CD4-positive, alpha-beta memory T cell (primary cell): ENCODE measurements at regions of chr16 and their contacts with region 1.

Region 1: GRCh38 chr16:1677802-1678496 is at the start of gene JPT2:
- DNase-seq: peak; percentile 93 to 95 (median 95)
- H3K4me3 ChIP-seq: peak within 1 kb of the TSS; percentile 46 to 73
- H3K4me3 Mint-ChIP-seq: peak within 1 kb of the TSS; percentile 86 to 94 (median 90)
- H3K27ac ChIP-seq: peak within 1 kb of the TSS; percentile 70
- H3K27ac Mint-ChIP-seq: peak within 1 kb of the TSS; percentile 77 to 95 (median 86)
- H3K4me1 ChIP-seq: peaks cover 28% of the 10 kb centered on the region
- H3K4me1 Mint-ChIP-seq: peaks cover 13 to 49% (median 29%) of the 10 kb centered on the region in 4 donors
- H3K27me3 ChIP-seq: no peaks in the 10 kb centered on the region
- H3K27me3 Mint-ChIP-seq: no peaks in the 10 kb centered on the region
- total RNA-seq, gene JPT2: 38.1 to 43.1 TPM

Region 2: GRCh38 chr16:1474796-1475551 is 203.0 kb before region 1 on chr16 and contains the start of gene CLCN7:
- CTCF ChIA-PET with region 1: no interaction called
- POLR2A ChIA-PET with region 1: interaction called, 4 read pairs
- intact Hi-C with region 1: loop called (anchors 1 kb)
- DNase-seq: peak; percentile 83 to 87 (median 85)
- H3K4me3 ChIP-seq: peak within 1 kb of the TSS; percentile 49 to 74
- H3K4me3 Mint-ChIP-seq: peak within 1 kb of the TSS; percentile 80 to 91 (median 84)
- H3K27ac ChIP-seq: peak within 1 kb of the TSS; percentile 91
- H3K27ac Mint-ChIP-seq: peak within 1 kb of the TSS; percentile 85 to 93 (median 91)
- H3K4me1 ChIP-seq: peaks cover 25% of the 10 kb centered on the region
- H3K4me1 Mint-ChIP-seq: peaks cover 8 to 46% (median 30%) of the 10 kb centered on the region in 4 donors
- H3K27me3 ChIP-seq: no peaks in the 10 kb centered on the region
- H3K27me3 Mint-ChIP-seq: peaks cover 0 to 3% of the 10 kb centered on the region in 2 donors
- total RNA-seq, gene CLCN7: 105 to 111 TPM

Region 3: DNA sequence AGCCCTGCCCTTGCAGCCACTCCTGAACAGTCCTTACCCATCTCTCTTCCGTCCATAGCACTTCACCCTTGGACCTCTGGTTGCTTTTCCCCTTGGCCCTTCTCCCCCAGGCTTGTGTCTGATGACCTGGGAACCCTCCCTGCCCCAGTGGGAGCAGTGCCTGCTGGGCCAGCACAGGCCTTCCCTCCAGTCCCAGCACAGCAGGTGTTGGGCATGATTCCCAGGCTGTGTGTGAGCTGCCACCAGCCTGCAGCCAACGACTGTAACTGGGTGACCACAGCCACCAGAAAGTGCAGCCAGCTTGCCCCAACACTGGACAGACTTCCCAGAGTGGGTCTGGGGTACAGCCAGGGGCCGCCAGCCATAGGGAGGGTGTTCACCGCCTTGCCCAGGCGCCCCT is 35.8 kb before region 1 on chr16:
- CTCF ChIA-PET with region 1: no interaction called
- POLR2A ChIA-PET with region 1: no interaction called
- intact Hi-C with region 1: no loop called
- DNase-seq: no peak
- H3K4me3 ChIP-seq: no peak overlapping the region
- H3K4me3 Mint-ChIP-seq: no peak overlapping the region
- H3K27ac ChIP-seq: no peak overlapping the region
- H3K27ac Mint-ChIP-seq: no peak overlapping the region
- H3K4me1 ChIP-seq: peaks cover 14% of the 10 kb centered on the region
- H3K4me1 Mint-ChIP-seq: peaks cover 15 to 32% (median 22%) of the 10 kb centered on the region in 4 donors
- H3K27me3 ChIP-seq: no peaks in the 10 kb centered on the region
- H3K27me3 Mint-ChIP-seq: no peaks in the 10 kb centered on the region

Region 4: DNA sequence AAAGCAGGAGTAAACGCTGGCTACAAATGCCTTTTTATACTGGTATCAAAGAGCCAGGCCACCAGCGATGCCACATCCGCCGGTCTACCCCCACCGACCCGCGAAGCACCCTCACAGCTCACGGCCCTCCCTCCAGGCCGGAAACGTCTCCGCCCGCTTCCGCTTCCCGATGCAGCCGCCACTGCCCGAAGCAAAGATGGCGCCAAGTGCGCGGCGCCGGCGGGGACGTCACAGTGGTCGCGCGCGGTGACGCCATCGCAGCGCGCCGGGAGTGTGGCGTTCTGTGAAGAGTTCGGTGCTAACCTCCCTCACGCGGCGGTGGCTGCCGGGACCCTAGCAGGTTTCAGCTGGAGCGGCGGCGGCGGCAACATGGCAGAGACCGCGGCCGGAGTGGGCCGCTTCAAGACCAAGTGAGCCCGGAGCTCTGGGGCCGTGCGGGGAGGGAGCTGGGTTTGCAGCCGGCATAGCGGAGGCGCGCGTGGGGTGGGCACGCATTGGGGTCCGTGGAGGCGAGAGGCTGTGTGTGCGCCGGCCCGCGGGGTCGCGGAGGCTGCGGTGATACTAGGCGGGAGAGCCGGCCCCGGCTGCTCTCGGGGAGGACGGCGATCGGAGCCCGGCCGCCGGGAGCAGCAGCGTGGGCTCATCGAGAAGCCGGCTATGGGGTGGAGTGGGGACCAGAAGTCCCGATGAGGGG is 294.0 kb after region 1 on chr16 and contains the start of gene TBL3:
- CTCF ChIA-PET with region 1: no interaction called
- POLR2A ChIA-PET with region 1: no interaction called
- intact Hi-C with region 1: no loop called
- DNase-seq: peak; percentile 97 to 98 (median 97)
- H3K4me3 ChIP-seq: peak within 1 kb of the TSS; percentile 55 to 73
- H3K4me3 Mint-ChIP-seq: peak within 1 kb of the TSS; percentile 94 to 99 (median 96)
- H3K27ac ChIP-seq: peak within 1 kb of the TSS; percentile 70
- H3K27ac Mint-ChIP-seq: peak within 1 kb of the TSS; percentile 89 to 99 (median 97)
- H3K4me1 ChIP-seq: peaks cover 27% of the 10 kb centered on the region
- H3K4me1 Mint-ChIP-seq: peaks cover 8 to 22% (median 16%) of the 10 kb centered on the region in 4 donors
- H3K27me3 ChIP-seq: no peaks in the 10 kb centered on the region
- H3K27me3 Mint-ChIP-seq: peaks cover 0 to 5% of the 10 kb centered on the region in 2 donors
- total RNA-seq, gene TBL3: 33.2 to 35.0 TPM